ENCODE measurements at regions of chr7 and their contacts with region 1.

Region 1: DNA sequence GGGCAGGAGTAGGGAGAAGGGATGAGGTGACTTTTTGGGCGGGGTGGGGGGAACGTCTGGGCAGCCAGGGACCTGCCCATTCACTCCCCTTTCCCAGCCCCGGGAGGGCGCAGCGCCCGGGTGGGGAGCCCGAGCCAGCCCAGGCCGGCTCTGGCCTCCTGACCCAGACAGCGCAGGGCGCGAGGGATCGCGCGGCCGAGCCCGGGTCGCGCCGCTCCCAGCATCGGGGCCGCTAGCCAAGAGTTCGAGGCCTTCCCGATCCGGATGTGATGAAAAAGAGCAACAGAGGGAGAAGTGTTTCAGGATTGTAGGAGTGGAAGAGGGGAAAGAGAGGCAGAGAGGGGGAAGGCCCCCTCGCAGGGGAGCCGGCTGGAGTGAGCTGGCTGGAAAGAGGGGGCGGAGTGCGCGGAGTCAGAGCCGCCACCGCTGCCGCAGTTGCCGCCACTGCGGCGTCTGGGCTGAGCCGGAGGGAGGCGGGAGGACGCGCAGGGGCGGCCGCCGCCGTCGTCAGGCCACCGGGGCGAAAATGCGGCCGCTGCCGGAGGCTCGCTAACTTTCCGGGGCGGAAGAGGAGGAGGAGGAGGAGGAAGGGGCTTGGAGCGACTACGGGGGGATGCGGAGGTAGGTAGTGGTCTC is at the start of gene MDFIC:
- DNase-seq: peak; percentile 3 to 29
- ATAC-seq: peak; percentile 66 to 68
- H3K4me3 ChIP-seq: peak within 1 kb of the TSS; percentile 76 to 96 (median 86)
- H3K27ac ChIP-seq: peak within 1 kb of the TSS; percentile 77 to 89 (median 85)
- H3K4me1 ChIP-seq: peaks cover 8 to 12% of the 10 kb centered on the region in 2 donors
- H3K27me3 ChIP-seq: no peaks in the 10 kb centered on the region
- CTCF ChIP-seq: no peak
- POLR2A ChIP-seq: peak; percentile 34
- total RNA-seq, gene MDFIC: 6.3 to 11.6 (median 10.6) TPM

Region 2: GRCh38 chr7:114979388-114979787 is 57.3 kb after region 1 on chr7:
- in situ Hi-C with region 1: no loop called
- intact Hi-C with region 1: loop called (anchors 5 kb)
- DNase-seq: peak; percentile 70 to 78
- ATAC-seq: peak; percentile 98
- H3K4me3 ChIP-seq: peak overlapping the region; percentile 14 to 40 (median 30)
- H3K27ac ChIP-seq: peak overlapping the region; percentile 77 to 85 (median 82)
- H3K4me1 ChIP-seq: peaks cover 32 to 43% of the 10 kb centered on the region in 2 donors
- H3K27me3 ChIP-seq: no peaks in the 10 kb centered on the region
- CTCF ChIP-seq: no peak
- POLR2A ChIP-seq: no peak

Region 3: DNA sequence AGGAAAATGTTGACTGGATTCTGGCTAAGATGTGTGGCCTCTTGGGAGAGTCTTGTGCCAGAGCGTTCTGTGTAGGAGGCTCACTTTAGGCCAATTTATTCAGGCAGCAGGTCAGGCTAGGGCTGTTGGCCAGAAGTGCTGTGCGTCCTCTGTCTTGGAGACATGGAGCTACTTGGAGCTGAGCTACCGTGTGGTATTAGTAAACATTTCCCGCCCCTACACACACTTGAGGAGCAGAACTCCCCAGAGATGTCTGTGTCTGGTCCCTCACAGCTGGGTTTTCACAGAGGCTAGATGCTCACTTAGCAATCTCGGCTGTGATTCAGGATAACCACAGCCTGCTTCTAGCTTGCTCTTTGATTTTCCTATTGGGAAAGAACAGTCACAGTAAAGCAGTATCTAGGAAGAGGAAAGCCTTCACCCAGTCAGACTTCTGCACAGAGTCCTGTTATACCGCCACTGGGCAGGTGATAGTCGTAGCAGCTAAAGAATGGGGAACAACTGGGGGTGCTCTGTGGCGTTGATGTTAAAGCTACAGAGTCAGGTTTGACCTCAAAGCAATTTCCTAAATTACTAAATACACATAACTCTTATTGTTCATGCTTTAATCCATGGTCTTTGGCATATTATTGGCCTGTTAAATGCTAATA is 86.5 kb after region 1 on chr7:
- in situ Hi-C with region 1: loop called in 1 of 4 experiments (anchors 5 kb)
- intact Hi-C with region 1: no loop called
- DNase-seq: peak; percentile 56 to 78
- ATAC-seq: peak; percentile 68 to 72
- H3K4me3 ChIP-seq: no peak overlapping the region
- H3K27ac ChIP-seq: peak overlapping the region; percentile 3 to 53 (median 20)
- H3K4me1 ChIP-seq: peaks cover 36 to 40% of the 10 kb centered on the region in 2 donors
- H3K27me3 ChIP-seq: no peaks in the 10 kb centered on the region
- CTCF ChIP-seq: no peak
- POLR2A ChIP-seq: no peak

Region 4: GRCh38 chr7:115087437-115087836 is 165.3 kb after region 1 on chr7:
- in situ Hi-C with region 1: no loop called
- intact Hi-C with region 1: loop called (anchors 10 kb)
- DNase-seq: no peak
- ATAC-seq: peak; percentile 72 to 73
- H3K4me3 ChIP-seq: no peak overlapping the region
- H3K27ac ChIP-seq: no peak overlapping the region
- H3K4me1 ChIP-seq: peaks cover 0 to 6% of the 10 kb centered on the region in 2 donors
- H3K27me3 ChIP-seq: no peaks in the 10 kb centered on the region
- CTCF ChIP-seq: no peak
- POLR2A ChIP-seq: no peak